ENCODE measurements at regions of chr1 and their contacts with region 1.

Region 1: GRCh38 chr1:186643600-186643999 is 36.6 kb downstream of the PTGS2 start:
- DNase-seq: peak; percentile 35
- ATAC-seq: no peak
- H3K4me3 ChIP-seq: no peak overlapping the region
- H3K27ac ChIP-seq: no peak overlapping the region
- H3K4me1 ChIP-seq: no peaks in the 10 kb centered on the region
- H3K27me3 ChIP-seq: no peaks in the 10 kb centered on the region
- CTCF ChIP-seq: no peak
- POLR2A ChIP-seq: no peak
- RAD21 ChIP-seq: no peak

Region 2: GRCh38 chr1:186435336-186435735 is 208.3 kb before region 1 on chr1:
- CTCF ChIA-PET with region 1: no interaction called
- POLR2A ChIA-PET with region 1: no interaction called
- dilution Hi-C with region 1: no loop called
- in situ Hi-C with region 1: no loop called
- intact Hi-C with region 1: no loop called
- DNase-seq: peak; percentile 42
- ATAC-seq: no peak
- H3K4me3 ChIP-seq: no peak overlapping the region
- H3K27ac ChIP-seq: no peak overlapping the region
- H3K4me1 ChIP-seq: no peaks in the 10 kb centered on the region
- H3K27me3 ChIP-seq: no peaks in the 10 kb centered on the region
- CTCF ChIP-seq: no peak
- POLR2A ChIP-seq: no peak
- RAD21 ChIP-seq: no peak

Region 3: GRCh38 chr1:186662740-186663139 is 19.1 kb after region 1 on chr1:
- CTCF ChIA-PET with region 1: no interaction called
- POLR2A ChIA-PET with region 1: no interaction called
- dilution Hi-C with region 1: no loop called
- in situ Hi-C with region 1: no loop called
- intact Hi-C with region 1: loop called (anchors 2 kb)
- DNase-seq: peak; percentile 52
- ATAC-seq: no peak
- H3K4me3 ChIP-seq: no peak overlapping the region
- H3K27ac ChIP-seq: no peak overlapping the region
- H3K4me1 ChIP-seq: no peaks in the 10 kb centered on the region
- H3K27me3 ChIP-seq: no peaks in the 10 kb centered on the region
- CTCF ChIP-seq: no peak
- POLR2A ChIP-seq: no peak
- RAD21 ChIP-seq: no peak

Region 4: DNA sequence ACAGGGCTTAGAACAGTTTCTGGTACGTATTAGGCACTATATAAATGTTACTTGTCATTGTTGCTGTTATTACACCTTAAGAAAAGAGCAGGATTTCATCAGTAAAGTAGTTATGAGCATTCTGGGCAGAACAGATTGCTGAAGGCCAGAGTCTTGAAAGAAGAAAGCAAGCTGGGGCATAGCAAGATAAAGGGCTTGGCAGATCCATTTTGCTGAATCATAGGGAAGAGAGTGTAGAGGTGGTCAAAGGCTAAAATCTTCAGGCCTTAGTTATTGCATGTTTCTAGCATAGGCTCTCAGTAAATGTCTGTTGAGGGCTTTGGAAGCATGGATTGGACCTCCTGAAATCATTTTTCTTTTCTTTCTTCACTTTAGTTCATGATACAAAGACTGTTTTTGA is 252.6 kb after region 1 on chr1:
- CTCF ChIA-PET with region 1: no interaction called
- POLR2A ChIA-PET with region 1: no interaction called
- dilution Hi-C with region 1: no loop called
- in situ Hi-C with region 1: no loop called
- intact Hi-C with region 1: no loop called
- DNase-seq: peak; percentile 26
- ATAC-seq: peak; percentile 35; the same call in 1 of the 2 replicates
- H3K4me3 ChIP-seq: no peak overlapping the region
- H3K27ac ChIP-seq: no peak overlapping the region
- H3K4me1 ChIP-seq: no peaks in the 10 kb centered on the region; the same call in 1 of the 2 replicates
- H3K27me3 ChIP-seq: no peaks in the 10 kb centered on the region
- CTCF ChIP-seq: no peak
- POLR2A ChIP-seq: no peak
- RAD21 ChIP-seq: no peak

Region 5: GRCh38 chr1:186943891-186944686 is 300.5 kb after region 1 on chr1:
- CTCF ChIA-PET with region 1: no interaction called
- POLR2A ChIA-PET with region 1: no interaction called
- dilution Hi-C with region 1: no loop called
- in situ Hi-C with region 1: no loop called
- intact Hi-C with region 1: no loop called
- DNase-seq: no peak
- ATAC-seq: no peak
- H3K4me3 ChIP-seq: no peak overlapping the region
- H3K27ac ChIP-seq: no peak overlapping the region
- H3K4me1 ChIP-seq: no peaks in the 10 kb centered on the region
- H3K27me3 ChIP-seq: no peaks in the 10 kb centered on the region
- CTCF ChIP-seq: no peak
- POLR2A ChIP-seq: no peak
- RAD21 ChIP-seq: no peak